ENCODE measurements at regions of chr5 and their contacts with region 1.

Region 1: DNA sequence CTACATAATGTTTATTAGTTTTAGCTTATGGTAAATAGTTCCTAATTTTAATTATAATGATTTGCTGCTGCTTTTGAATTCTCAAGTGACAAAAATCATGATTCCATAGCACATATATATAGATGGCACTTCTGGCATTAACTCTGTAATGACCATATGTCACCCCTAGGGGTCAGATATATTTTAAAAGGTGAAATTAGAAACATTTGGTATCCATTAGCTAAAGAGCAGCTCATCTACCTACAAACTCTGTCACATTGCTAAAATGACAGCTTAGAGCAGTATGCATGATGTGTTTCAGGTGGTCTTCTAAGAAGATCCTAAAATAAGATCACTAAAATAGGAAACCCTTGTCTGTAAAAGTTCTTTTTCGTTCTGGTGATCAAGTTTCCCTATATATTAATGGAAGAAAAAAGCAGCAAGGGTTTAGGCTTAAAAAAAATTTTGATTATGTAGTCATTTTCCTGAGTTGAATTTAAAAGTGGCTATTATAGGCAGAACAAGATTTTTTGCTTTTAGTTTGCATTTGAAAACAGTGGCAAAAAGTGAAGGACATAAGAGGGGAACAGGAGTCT is 157.7 kb upstream of the POU5F2 start:
- DNase-seq: no peak
- H3K4me3 ChIP-seq: no peak overlapping the region
- H3K27ac ChIP-seq: no peak overlapping the region
- H3K4me1 ChIP-seq: no peaks in the 10 kb centered on the region
- H3K27me3 ChIP-seq: no peaks in the 10 kb centered on the region
- CTCF ChIP-seq: peak; percentile 67

Region 2: GRCh38 chr5:93596676-93597461 is 302.2 kb before region 1 on chr5:
- CTCF ChIA-PET with region 1: no interaction called
- POLR2A ChIA-PET with region 1: no interaction called
- intact Hi-C with region 1: loop called (anchors 10 kb)
- DNase-seq: peak in 1 of 2 experiments; percentile 84
- H3K4me3 ChIP-seq: no peak overlapping the region
- H3K27ac ChIP-seq: no peak overlapping the region
- H3K4me1 ChIP-seq: no peaks in the 10 kb centered on the region
- H3K27me3 ChIP-seq: no peaks in the 10 kb centered on the region
- CTCF ChIP-seq: no peak

Region 3: GRCh38 chr5:93800988-93801811 is 97.9 kb before region 1 on chr5:
- CTCF ChIA-PET with region 1: no interaction called
- POLR2A ChIA-PET with region 1: no interaction called
- intact Hi-C with region 1: no loop called
- DNase-seq: peak; percentile 53 to 90
- H3K4me3 ChIP-seq: peak overlapping the region; percentile 43
- H3K27ac ChIP-seq: peak overlapping the region; percentile 61
- H3K4me1 ChIP-seq: peaks cover 18% of the 10 kb centered on the region
- H3K27me3 ChIP-seq: no peaks in the 10 kb centered on the region
- CTCF ChIP-seq: peak; percentile 90